ENCODE measurements at regions of chr6 and their contacts with region 1.

Region 1: DNA sequence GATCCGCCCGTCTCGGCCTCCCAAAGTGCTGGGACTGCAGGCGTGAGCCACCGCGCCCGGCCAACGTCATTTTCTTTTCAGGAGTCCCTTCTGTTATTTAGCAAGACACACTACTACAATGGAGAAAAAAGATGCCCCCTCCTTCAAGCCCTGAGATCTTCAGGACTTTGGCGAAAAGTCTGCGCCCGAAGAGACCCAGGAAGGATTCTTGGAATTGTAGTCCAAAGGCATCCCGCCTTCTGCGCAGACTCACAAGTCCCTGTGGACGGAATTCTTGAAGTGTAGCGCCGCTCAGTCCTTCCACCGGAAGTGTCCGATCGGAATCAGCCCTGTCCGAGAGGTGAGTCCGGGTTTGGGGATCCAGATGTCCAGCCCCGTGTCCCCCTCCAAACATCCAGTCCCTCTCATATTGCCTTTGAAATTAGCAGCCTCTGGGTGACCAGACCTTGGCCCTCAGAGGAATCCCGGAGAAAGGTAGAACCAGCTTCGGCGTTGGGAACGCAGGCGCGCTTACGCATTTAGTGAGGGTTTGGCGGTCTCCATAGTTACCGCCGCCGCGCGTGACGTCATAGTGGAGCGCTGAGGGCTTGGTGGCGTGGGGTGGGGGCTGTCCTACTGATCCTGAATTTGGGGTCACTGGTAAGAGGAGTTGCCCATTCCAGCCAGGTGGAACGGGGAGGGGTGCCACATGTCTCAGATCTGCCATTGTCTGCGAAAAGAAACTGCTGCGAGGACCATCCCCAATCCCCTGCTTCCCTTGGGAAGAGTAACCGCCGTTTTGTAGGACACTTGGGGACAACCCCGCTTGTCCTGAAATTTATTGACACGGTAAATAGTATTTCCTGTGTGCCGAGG is 490 bp downstream of the ZNF165 start:
- DNase-seq: peak; percentile 89
- ATAC-seq: peak; percentile 68
- H3K4me3 Mint-ChIP-seq: peak overlapping the region; percentile 98
- H3K27ac Mint-ChIP-seq: peak overlapping the region; percentile 97
- H3K4me1 Mint-ChIP-seq: peaks cover 52% of the 10 kb centered on the region
- H3K27me3 Mint-ChIP-seq: no peaks in the 10 kb centered on the region
- CTCF ChIP-seq: no peak

Region 2: DNA sequence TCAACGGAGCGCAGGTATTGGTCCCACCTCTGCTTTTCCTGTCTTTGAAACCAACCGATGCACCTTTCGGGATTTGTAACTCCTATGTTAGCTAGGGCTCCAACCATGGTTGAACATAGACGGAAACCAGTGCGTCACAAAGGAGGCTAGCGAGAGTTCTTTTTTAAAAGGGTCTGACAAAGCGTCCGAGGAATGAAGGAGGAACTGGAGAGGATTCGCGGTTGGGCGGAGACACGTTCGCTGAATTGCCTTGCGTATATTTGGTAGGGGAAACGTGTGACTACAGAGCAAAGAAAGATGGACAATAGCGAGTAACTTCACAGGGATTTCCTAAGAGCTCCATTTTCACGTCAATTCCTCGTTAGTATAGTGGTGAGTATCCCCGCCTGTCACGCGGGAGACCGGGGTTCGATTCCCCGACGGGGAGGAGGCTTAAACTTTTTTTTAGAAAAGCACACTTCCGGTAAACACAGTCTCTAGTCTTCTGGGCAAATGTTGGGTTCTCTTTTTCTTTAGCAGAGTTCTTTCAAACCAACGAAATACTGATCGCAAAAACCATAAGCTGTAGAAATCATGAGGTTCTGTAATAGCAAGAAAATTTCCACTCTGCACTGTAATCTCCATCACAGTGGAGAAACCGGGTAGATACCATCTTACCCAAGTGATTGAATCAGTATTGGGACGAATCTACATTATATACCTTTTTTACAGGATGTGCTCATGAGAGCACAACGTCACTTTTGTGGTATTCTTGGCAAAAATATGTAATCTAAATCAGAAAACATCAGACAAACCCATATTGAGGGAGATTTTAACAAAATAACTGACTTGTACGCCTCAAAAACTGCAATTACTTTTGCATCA is 601.3 kb before region 1 on chr6:
- CTCF ChIA-PET with region 1: no interaction called
- POLR2A ChIA-PET with region 1: no interaction called
- intact Hi-C with region 1: loop called (anchors 1 kb)
- DNase-seq: peak; percentile 84
- ATAC-seq: peak; percentile 76
- H3K4me3 Mint-ChIP-seq: no peak overlapping the region
- H3K27ac Mint-ChIP-seq: no peak overlapping the region
- H3K4me1 Mint-ChIP-seq: peaks cover 9% of the 10 kb centered on the region
- H3K27me3 Mint-ChIP-seq: no peaks in the 10 kb centered on the region
- CTCF ChIP-seq: no peak

Region 3: GRCh38 chr6:27902335-27903314 is 178.2 kb before region 1 on chr6:
- CTCF ChIA-PET with region 1: interaction called, 3 read pairs
- POLR2A ChIA-PET with region 1: interaction called, 4 read pairs
- intact Hi-C with region 1: loop called (anchors 1 kb)
- DNase-seq: peak; percentile 75
- ATAC-seq: peak; percentile 83
- H3K4me3 Mint-ChIP-seq: peak overlapping the region; percentile 89
- H3K27ac Mint-ChIP-seq: peak overlapping the region; percentile 96
- H3K4me1 Mint-ChIP-seq: peaks cover 10% of the 10 kb centered on the region
- H3K27me3 Mint-ChIP-seq: peaks cover 3% of the 10 kb centered on the region
- CTCF ChIP-seq: no peak

Region 4: GRCh38 chr6:28153546-28153945 is 72.7 kb after region 1 on chr6:
- CTCF ChIA-PET with region 1: no interaction called
- POLR2A ChIA-PET with region 1: no interaction called
- intact Hi-C with region 1: no loop called
- DNase-seq: no peak
- ATAC-seq: no peak
- H3K4me3 Mint-ChIP-seq: no peak overlapping the region
- H3K27ac Mint-ChIP-seq: no peak overlapping the region
- H3K4me1 Mint-ChIP-seq: no peaks in the 10 kb centered on the region
- H3K27me3 Mint-ChIP-seq: no peaks in the 10 kb centered on the region
- CTCF ChIP-seq: no peak

Region 5: GRCh38 chr6:28225056-28225834 is 144.4 kb after region 1 on chr6 and contains the start of gene ZSCAN9:
- CTCF ChIA-PET with region 1: no interaction called
- POLR2A ChIA-PET with region 1: no interaction called
- intact Hi-C with region 1: loop called (anchors 1 kb)
- DNase-seq: peak; percentile 52
- ATAC-seq: peak; percentile 89
- H3K4me3 Mint-ChIP-seq: peak within 1 kb of the TSS; percentile 88
- H3K27ac Mint-ChIP-seq: peak within 1 kb of the TSS; percentile 68
- H3K4me1 Mint-ChIP-seq: peaks cover 21% of the 10 kb centered on the region
- H3K27me3 Mint-ChIP-seq: peaks cover 21% of the 10 kb centered on the region
- CTCF ChIP-seq: no peak
- total RNA-seq, gene ZSCAN9: 25.9 and 30.3 TPM in 2 replicates

Region 6: DNA sequence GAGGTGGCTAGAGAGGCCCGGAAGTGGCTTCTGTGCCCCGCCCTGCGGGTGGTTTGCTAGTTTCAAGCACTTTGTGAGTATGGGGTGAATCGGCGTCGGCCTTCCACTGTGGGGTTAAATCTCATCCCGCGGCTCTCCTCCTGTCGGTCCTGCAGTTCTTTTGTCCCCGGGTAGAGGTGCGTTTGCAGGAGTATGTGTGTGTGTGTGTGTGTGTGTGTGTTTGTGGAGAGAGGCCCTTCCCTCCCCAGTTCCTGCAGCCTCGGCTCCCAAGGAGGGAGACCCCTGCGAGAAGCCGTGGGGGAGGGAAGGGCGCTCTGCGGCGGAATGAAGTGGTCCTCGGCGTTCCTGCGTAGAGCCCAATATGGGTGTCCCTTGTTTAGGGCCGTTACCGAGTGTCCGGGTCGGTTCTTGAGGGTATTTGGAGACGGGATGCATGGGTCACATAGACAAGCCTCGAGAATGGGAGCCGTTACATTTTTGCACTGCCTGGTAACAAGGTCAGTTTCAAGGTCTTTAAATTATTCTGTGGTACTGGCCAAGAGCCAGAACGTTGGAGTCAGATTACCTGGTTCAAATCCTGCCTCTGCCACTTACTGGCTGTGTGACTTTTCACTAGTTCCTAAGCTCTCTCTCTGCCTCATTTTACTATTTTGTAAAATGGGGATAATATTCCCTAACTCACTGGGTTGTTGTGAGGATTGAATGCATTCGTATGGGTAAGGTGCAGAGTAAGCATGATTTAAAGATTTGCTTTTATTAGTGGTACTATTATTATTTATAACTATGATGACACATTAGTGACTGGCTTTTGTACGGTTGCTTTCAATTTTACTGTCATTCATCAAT is 269.3 kb after region 1 on chr6 and contains the start of gene ZKSCAN3:
- CTCF ChIA-PET with region 1: no interaction called
- POLR2A ChIA-PET with region 1: interaction called, 4 read pairs
- intact Hi-C with region 1: loop called (anchors 5 kb)
- DNase-seq: peak; percentile 68
- ATAC-seq: peak; percentile 100
- H3K4me3 Mint-ChIP-seq: peak within 1 kb of the TSS; percentile 96
- H3K27ac Mint-ChIP-seq: peak within 1 kb of the TSS; percentile 94
- H3K4me1 Mint-ChIP-seq: peaks cover 28% of the 10 kb centered on the region
- H3K27me3 Mint-ChIP-seq: peaks cover 7% of the 10 kb centered on the region
- CTCF ChIP-seq: no peak
- total RNA-seq, gene ZKSCAN3: 5.6 and 6.3 TPM in 2 replicates

Region 7: DNA sequence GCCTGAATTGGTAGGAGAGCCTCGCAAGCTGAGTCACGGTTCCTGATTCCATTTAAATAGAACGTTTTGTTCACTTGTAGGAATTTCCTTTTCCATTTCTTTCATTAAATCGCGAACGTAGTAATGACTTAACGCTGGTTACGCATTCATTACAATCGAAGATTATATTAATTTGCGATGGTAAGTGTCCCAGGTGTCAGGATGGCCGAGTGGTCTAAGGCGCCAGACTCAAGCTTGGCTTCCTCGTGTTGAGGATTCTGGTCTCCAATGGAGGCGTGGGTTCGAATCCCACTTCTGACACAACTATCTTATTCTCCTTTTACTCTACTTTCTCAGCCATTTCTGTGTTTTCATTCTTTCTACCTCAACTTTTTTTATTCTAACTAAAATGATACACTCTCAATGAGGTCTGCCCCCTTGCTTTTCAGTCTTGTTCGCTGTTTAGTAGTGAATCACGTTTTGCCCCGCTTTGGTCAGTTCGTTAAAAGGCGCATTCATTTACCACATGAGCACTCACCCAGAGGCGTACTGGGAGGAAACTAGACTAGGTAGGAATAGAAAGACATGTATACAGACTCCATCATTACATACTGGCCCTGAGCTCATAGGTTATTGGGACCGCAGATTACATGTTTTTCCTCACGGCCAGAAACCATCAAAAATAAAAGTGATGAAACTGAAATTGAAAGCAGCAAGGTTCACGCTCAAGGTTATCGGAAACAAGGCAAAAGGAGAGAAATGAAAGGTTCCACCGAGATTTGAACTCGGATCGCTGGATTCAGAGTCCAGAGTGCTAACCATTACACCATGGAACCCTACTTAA is 860.2 kb after region 1 on chr6:
- CTCF ChIA-PET with region 1: no interaction called
- POLR2A ChIA-PET with region 1: no interaction called
- intact Hi-C with region 1: loop called (anchors 5 kb)
- DNase-seq: peak; percentile 36
- ATAC-seq: peak; percentile 66
- H3K4me3 Mint-ChIP-seq: peak overlapping the region; percentile 95
- H3K27ac Mint-ChIP-seq: peak overlapping the region; percentile 88
- H3K4me1 Mint-ChIP-seq: peaks cover 47% of the 10 kb centered on the region
- H3K27me3 Mint-ChIP-seq: peaks cover 3% of the 10 kb centered on the region
- CTCF ChIP-seq: no peak

Measured in activated B cell treated with CpG ODN at 0.5 μM for 24 hours (primary cell).